MCF 10A (cell line): ENCODE measurements at regions of chr7 and their contacts with region 1.

Region 1: GRCh38 chr7:143008007-143008901 is 18.7 kb downstream of the OR9A2 start:
- DNase-seq: peak; percentile 74
- H3K4me3 Mint-ChIP-seq: no peak overlapping the region
- H3K27ac Mint-ChIP-seq: no peak overlapping the region
- H3K4me1 Mint-ChIP-seq: no peaks in the 10 kb centered on the region
- H3K27me3 Mint-ChIP-seq: peaks cover 54% of the 10 kb centered on the region
- CTCF ChIP-seq: peak; percentile 95

Region 2: GRCh38 chr7:142263598-142264380 is 744.5 kb before region 1 on chr7:
- CTCF ChIA-PET with region 1: no interaction called
- POLR2A ChIA-PET with region 1: no interaction called
- intact Hi-C with region 1: no loop called
- DNase-seq: peak; percentile 59
- H3K4me3 Mint-ChIP-seq: no peak overlapping the region
- H3K27ac Mint-ChIP-seq: no peak overlapping the region
- H3K4me1 Mint-ChIP-seq: peaks cover 21% of the 10 kb centered on the region
- H3K27me3 Mint-ChIP-seq: no peaks in the 10 kb centered on the region
- CTCF ChIP-seq: no peak

Region 3: DNA sequence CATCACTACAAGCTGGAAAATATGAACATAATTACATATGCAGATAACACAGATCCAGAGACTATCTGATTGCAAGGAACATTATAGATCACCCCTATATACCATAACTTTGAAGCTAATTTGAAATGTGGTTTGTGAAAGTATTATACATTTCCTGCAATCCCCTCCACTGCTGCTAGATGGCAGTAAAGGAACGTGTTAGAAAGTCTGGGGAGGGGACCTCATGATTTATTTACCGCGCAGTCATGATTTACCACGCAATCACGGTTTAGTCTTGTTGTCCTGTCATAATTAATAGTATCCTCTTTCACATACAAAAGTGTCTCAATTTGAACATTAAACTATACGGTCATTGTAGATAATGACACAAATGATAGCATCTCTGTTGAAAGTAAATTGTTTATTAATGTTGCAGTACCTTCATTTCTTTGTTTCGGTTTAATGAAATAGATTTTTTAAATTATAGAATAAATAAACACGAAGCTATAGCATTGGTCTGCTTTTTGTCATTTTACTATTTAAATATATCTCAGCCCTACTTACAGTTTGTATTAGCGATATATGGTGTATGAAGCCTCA is 404.3 kb before region 1 on chr7:
- CTCF ChIA-PET with region 1: interaction called, 13 read pairs
- POLR2A ChIA-PET with region 1: no interaction called
- intact Hi-C with region 1: no loop called
- DNase-seq: peak; percentile 71
- H3K4me3 Mint-ChIP-seq: peak overlapping the region; percentile 8
- H3K27ac Mint-ChIP-seq: no peak overlapping the region
- H3K4me1 Mint-ChIP-seq: peaks cover 14% of the 10 kb centered on the region
- H3K27me3 Mint-ChIP-seq: no peaks in the 10 kb centered on the region
- CTCF ChIP-seq: peak; percentile 83

Region 4: GRCh38 chr7:142853739-142854371 is 154.4 kb before region 1 on chr7:
- CTCF ChIA-PET with region 1: interaction called, 66 read pairs
- POLR2A ChIA-PET with region 1: no interaction called
- intact Hi-C with region 1: loop called (anchors 1 kb)
- DNase-seq: peak; percentile 76
- H3K4me3 Mint-ChIP-seq: peak overlapping the region; percentile 82
- H3K27ac Mint-ChIP-seq: peak overlapping the region; percentile 55
- H3K4me1 Mint-ChIP-seq: peaks cover 29% of the 10 kb centered on the region
- H3K27me3 Mint-ChIP-seq: peaks cover 51% of the 10 kb centered on the region
- CTCF ChIP-seq: peak; percentile 88

Region 5: GRCh38 chr7:142873281-142873787 is 134.9 kb before region 1 on chr7:
- CTCF ChIA-PET with region 1: interaction called, 127 read pairs
- POLR2A ChIA-PET with region 1: no interaction called
- intact Hi-C with region 1: no loop called
- DNase-seq: no peak
- H3K4me3 Mint-ChIP-seq: no peak overlapping the region
- H3K27ac Mint-ChIP-seq: no peak overlapping the region
- H3K4me1 Mint-ChIP-seq: no peaks in the 10 kb centered on the region
- H3K27me3 Mint-ChIP-seq: peaks cover 29% of the 10 kb centered on the region
- CTCF ChIP-seq: peak; percentile 24

Region 6: DNA sequence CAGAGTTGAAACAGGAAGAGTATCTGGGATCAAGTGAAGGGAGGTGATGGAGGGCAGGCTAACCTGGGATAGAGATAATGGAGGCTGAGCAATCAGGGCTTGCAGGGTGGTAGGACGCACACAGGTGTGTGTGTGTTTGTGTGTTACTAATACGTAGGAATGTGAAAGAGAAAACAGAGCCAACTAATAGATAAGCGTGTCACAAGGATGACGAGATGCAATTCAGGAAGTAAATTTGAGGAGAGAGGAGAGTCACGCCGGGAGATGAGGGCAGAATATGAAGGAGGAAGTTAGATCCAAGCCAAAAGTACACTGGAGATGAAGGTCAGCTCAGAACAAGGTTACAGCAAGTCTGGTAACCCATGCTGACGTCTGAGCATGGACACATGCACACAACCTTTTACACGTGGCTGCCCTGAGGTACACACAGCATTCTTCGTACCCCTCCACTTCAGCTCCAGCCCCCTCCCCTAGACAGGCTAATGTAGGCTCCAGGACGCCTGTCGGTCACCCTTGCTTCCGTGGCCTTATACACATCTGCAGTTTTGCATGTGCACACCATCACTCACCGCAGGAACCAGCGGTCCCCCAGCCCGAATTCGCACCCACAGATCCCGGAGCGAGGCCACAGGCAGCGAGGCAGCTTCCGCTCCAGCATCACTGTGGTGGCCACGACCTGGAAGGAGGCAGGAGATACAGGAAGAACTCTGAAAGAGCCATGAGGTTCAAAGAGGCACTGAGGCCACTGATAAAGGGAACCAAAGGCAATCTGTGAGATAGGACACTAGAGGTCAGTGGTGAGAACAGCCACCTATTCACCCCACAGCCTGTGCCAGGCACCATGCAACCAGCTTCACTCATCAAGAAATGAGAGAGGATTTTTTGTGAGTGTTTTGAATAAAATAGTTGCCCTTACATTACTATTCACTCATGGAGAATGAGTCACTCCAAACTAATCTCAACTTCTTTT is 99.0 kb before region 1 on chr7:
- CTCF ChIA-PET with region 1: interaction called, 37 read pairs
- POLR2A ChIA-PET with region 1: no interaction called
- intact Hi-C with region 1: loop called (anchors 5 kb)
- DNase-seq: peak; percentile 46
- H3K4me3 Mint-ChIP-seq: no peak overlapping the region
- H3K27ac Mint-ChIP-seq: no peak overlapping the region
- H3K4me1 Mint-ChIP-seq: no peaks in the 10 kb centered on the region
- H3K27me3 Mint-ChIP-seq: peaks cover 73% of the 10 kb centered on the region
- CTCF ChIP-seq: peak; percentile 29

Region 7: DNA sequence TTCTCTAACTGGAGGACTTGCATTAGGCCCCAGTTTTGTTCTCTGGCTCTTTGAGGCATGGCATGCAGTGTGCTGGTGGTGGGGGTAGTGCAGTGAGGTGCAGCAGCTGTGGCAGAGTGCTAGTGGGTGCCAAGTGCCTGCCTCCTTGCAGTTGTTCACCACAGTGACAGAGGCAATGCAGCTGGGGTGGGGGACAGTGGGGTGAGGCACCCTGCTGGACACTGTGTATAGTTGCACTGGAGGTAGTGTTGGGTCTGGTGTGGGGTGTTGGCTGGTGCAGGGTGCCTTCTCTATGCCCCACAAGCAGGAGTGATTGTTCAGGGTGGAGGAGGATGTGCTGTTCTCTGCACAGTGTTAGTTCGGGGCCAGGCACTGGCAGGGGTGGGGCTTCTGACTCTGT is 24.4 kb before region 1 on chr7:
- CTCF ChIA-PET with region 1: interaction called, 15 read pairs
- POLR2A ChIA-PET with region 1: no interaction called
- intact Hi-C with region 1: no loop called
- DNase-seq: no peak
- H3K4me3 Mint-ChIP-seq: no peak overlapping the region
- H3K27ac Mint-ChIP-seq: no peak overlapping the region
- H3K4me1 Mint-ChIP-seq: no peaks in the 10 kb centered on the region
- H3K27me3 Mint-ChIP-seq: no peaks in the 10 kb centered on the region
- CTCF ChIP-seq: no peak

Region 8: GRCh38 chr7:143240291-143241168 is 232.3 kb after region 1 on chr7:
- CTCF ChIA-PET with region 1: interaction called, 11 read pairs
- POLR2A ChIA-PET with region 1: no interaction called
- intact Hi-C with region 1: no loop called
- DNase-seq: peak; percentile 82
- H3K4me3 Mint-ChIP-seq: peak overlapping the region; percentile 7
- H3K27ac Mint-ChIP-seq: peak overlapping the region; percentile 39
- H3K4me1 Mint-ChIP-seq: peaks cover 21% of the 10 kb centered on the region
- H3K27me3 Mint-ChIP-seq: peaks cover 21% of the 10 kb centered on the region
- CTCF ChIP-seq: peak; percentile 92